Common myeloid progenitor, CD34-positive (primary cell): ENCODE measurements at regions of chr12 and their contacts with region 1.

Region 1: GRCh38 chr12:68815928-68816800 is 8.2 kb downstream of the MDM2 start:
- DNase-seq: no peak
- H3K4me3 ChIP-seq: no peak overlapping the region
- H3K27ac ChIP-seq: peak overlapping the region in 1 of 2 experiments; percentile 4
- H3K4me1 ChIP-seq: peaks cover 0 to 3% (median 0%) of the 10 kb centered on the region in 4 experiments
- H3K27me3 ChIP-seq: no peaks in the 10 kb centered on the region

Region 2: GRCh38 chr12:68686595-68687521 is 129.3 kb before region 1 on chr12 and contains the start of gene NUP107:
- CTCF ChIA-PET with region 1: no interaction called
- POLR2A ChIA-PET with region 1: no interaction called
- DNase-seq: peak; percentile 98 to 99 (median 98)
- H3K4me3 ChIP-seq: peak within 1 kb of the TSS; percentile 69 to 100 (median 97)
- H3K27ac ChIP-seq: peak within 1 kb of the TSS; percentile 83 to 93
- H3K4me1 ChIP-seq: peaks cover 6 to 26% (median 14%) of the 10 kb centered on the region in 4 experiments
- H3K27me3 ChIP-seq: no peaks in the 10 kb centered on the region

Region 3: GRCh38 chr12:68831272-68831671 is 15.1 kb after region 1 on chr12:
- CTCF ChIA-PET with region 1: interaction called, 30 read pairs
- POLR2A ChIA-PET with region 1: no interaction called
- DNase-seq: no peak
- H3K4me3 ChIP-seq: no peak overlapping the region
- H3K27ac ChIP-seq: peak overlapping the region in 1 of 2 experiments; percentile 25
- H3K4me1 ChIP-seq: no peaks in the 10 kb centered on the region
- H3K27me3 ChIP-seq: no peaks in the 10 kb centered on the region